OCI-LY7 (cell line): ENCODE measurements at regions of chr22 and their contacts with region 1.

Region 1: GRCh38 chr22:37218771-37219411 is 6.6 kb upstream of the SSTR3 start:
- DNase-seq: peak; percentile 87
- H3K4me3 ChIP-seq: peak overlapping the region; percentile 35
- H3K27ac ChIP-seq: peak overlapping the region; percentile 84
- H3K4me1 ChIP-seq: peaks cover 49% of the 10 kb centered on the region
- CTCF ChIP-seq: no peak

Region 2: GRCh38 chr22:37229805-37230672 is 11.1 kb after region 1 on chr22:
- CTCF ChIA-PET with region 1: no interaction called
- POLR2A ChIA-PET with region 1: interaction called, 11 read pairs
- intact Hi-C with region 1: no loop called
- DNase-seq: peak; percentile 92
- H3K4me3 ChIP-seq: peak overlapping the region; percentile 28
- H3K27ac ChIP-seq: peak overlapping the region; percentile 89
- H3K4me1 ChIP-seq: peaks cover 83% of the 10 kb centered on the region
- CTCF ChIP-seq: no peak